CD14-positive monocyte (primary cell): ENCODE measurements at regions of chr10 and their contacts with region 1.

Region 1: DNA sequence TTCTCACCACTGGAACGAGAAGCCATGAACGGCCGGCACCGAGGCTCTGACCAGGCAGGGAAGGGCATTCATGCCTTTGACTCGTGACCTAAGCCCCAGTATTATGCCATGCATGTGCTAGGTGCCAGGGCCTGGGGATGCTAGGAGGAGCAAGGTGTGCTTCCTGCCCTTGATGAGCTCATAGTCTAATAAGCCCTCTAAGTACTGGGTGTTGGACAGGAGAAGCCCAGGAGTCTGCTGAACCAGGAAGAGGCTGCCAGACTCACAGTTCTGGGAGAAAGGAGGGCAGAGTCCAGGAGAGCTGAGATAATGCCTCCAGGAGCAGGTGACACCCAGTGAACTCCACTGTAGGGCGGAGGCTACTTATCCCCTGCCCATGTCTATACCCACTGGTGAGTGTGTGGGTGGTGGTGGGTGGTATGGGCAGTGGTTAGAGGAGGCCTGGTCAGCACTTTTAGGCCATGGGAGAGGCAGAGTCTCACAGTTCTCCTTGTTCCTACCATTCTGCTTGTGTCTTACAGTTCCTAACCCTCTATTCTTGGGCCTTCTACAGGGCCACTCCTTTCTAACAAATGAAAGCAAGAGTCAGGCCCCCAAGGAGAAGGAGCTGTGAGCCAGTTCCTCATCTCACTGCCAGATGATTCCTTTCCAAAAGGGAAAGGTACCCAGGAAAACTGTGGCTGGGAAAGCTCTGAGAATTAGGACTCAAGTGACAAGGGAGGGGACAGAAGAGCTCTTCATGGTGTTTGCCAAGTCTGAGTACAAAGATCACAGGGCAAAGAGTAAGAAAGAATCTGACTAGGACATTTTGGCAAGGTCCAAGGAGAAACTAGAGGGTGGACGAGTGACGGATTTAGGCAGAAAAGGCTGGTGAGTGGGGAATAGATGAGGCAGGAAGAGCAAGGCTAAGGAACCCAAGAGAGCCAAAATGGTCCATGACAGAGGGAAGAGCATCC is 3.6 kb upstream of the MXI1 start:
- DNase-seq: no peak
- H3K4me3 ChIP-seq: no peak overlapping the region
- H3K4me3 Mint-ChIP-seq: no peak overlapping the region
- H3K27ac ChIP-seq: no peak overlapping the region
- H3K27ac Mint-ChIP-seq: no peak overlapping the region
- H3K4me1 ChIP-seq: peaks cover 29 to 30% of the 10 kb centered on the region in 2 donors
- H3K4me1 Mint-ChIP-seq: peaks cover 34% of the 10 kb centered on the region
- H3K27me3 ChIP-seq: peaks cover 0 to 10% of the 10 kb centered on the region in 2 donors
- H3K27me3 Mint-ChIP-seq: peaks cover 7 to 20% (median 14%) of the 10 kb centered on the region in 3 donors
- CTCF ChIP-seq: no peak

Region 2: GRCh38 chr10:110168601-110169481 is 34.9 kb before region 1 on chr10:
- intact Hi-C with region 1: loop called in 1 of 2 experiments (anchors 5 kb)
- DNase-seq: no peak
- H3K4me3 ChIP-seq: peak overlapping the region in 1 of 3 experiments; percentile 13
- H3K4me3 Mint-ChIP-seq: peak overlapping the region in 1 of 2 donors; percentile 88
- H3K27ac ChIP-seq: no peak overlapping the region
- H3K27ac Mint-ChIP-seq: no peak overlapping the region
- H3K4me1 ChIP-seq: peaks cover 28 to 29% of the 10 kb centered on the region in 2 donors
- H3K4me1 Mint-ChIP-seq: peaks cover 35% of the 10 kb centered on the region
- H3K27me3 ChIP-seq: peaks cover 33 to 41% of the 10 kb centered on the region in 2 donors
- H3K27me3 Mint-ChIP-seq: peaks cover 44 to 54% (median 48%) of the 10 kb centered on the region in 3 donors
- CTCF ChIP-seq: no peak

Region 3: DNA sequence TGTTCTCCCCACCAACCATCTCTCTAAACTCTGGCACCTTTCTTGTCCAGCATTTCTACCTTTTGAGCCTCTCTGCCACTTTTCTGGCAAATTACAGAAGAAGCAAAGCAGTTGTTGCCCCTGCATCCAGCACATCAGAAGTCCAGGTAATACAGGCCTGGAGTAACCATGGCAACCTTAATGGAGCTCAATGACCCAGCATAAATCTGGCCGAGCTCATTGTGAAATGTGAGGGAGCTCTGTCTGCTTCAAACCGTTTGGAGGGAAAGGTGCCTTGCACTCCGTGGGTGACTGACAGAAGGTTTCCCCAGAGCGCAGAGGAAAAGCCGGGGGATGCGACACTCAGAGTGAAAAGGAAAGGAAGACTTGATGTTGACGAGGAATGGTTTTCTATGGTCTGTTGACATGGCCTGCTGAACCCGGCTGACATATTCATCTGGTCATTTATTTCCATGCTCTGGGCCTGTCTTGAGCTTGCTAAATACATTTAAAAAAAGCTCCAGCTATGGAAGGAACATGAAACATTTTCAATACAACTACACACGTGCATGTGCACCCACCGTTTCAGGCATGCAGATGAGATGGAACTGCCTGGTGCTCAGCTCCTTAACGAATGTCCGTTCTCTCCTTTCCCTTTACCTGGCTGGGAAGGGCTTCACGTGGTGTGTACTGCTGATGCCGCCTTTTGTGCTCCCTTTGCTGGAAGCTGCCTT is 948.0 kb after region 1 on chr10:
- intact Hi-C with region 1: no loop called
- DNase-seq: no peak
- H3K4me3 ChIP-seq: no peak overlapping the region
- H3K4me3 Mint-ChIP-seq: no peak overlapping the region
- H3K27ac ChIP-seq: no peak overlapping the region
- H3K27ac Mint-ChIP-seq: no peak overlapping the region
- H3K4me1 ChIP-seq: no peaks in the 10 kb centered on the region
- H3K4me1 Mint-ChIP-seq: no peaks in the 10 kb centered on the region
- H3K27me3 ChIP-seq: no peaks in the 10 kb centered on the region
- H3K27me3 Mint-ChIP-seq: peaks cover 5 to 7% (median 6%) of the 10 kb centered on the region in 3 donors
- CTCF ChIP-seq: no peak